ENCODE measurements at regions of chr1 and their contacts with region 1.

Region 1: GRCh38 chr1:38018864-38019343 is 6.4 kb downstream of the UTP11 start:
- DNase-seq: no peak
- H3K4me3 ChIP-seq: no peak overlapping the region
- H3K27me3 ChIP-seq: no peaks in the 10 kb centered on the region
- CTCF ChIP-seq: peak; percentile 61

Region 2: DNA sequence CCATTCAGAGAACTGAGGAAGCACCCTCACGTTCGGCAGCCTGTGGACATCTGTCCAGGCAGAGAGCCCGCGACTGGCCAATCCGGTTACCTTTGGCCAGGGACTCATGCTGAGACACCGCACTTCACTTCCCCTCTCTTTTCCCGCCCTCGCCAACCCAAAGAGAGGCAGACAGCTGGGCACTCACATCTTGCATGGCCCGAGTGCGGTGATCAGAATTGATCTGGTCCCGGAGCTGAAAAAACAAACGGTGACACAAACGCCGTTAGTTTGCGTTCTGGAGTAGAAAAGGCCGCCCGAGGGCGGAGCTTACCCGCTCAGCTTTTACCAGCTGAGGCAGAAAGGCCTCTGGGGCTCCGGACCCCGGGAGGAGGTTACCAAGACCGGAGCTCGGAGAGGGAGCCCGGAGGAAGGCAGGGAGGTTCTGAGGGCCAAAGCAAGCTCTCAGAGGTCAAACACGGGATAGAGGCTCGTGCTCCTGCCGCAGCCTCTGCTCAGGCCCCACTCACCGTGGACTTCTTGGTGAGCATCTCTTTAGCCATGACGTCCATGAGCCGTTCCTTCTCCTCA is 29.5 kb before region 1 on chr1:
- CTCF ChIA-PET with region 1: interaction called, 26 read pairs
- POLR2A ChIA-PET with region 1: no interaction called
- DNase-seq: no peak
- H3K4me3 ChIP-seq: peak overlapping the region; percentile 86
- H3K27me3 ChIP-seq: no peaks in the 10 kb centered on the region
- CTCF ChIP-seq: no peak

Region 3: GRCh38 chr1:37995751-37996345 is 23.1 kb before region 1 on chr1:
- CTCF ChIA-PET with region 1: interaction called, 26 read pairs
- POLR2A ChIA-PET with region 1: no interaction called
- DNase-seq: no peak
- H3K4me3 ChIP-seq: peak overlapping the region; percentile 41
- H3K27me3 ChIP-seq: no peaks in the 10 kb centered on the region
- CTCF ChIP-seq: no peak

Region 4: GRCh38 chr1:39592069-39592468 is 1573.2 kb after region 1 on chr1:
- CTCF ChIA-PET with region 1: no interaction called
- POLR2A ChIA-PET with region 1: interaction called, 12 read pairs
- DNase-seq: no peak
- H3K4me3 ChIP-seq: no peak overlapping the region
- H3K27me3 ChIP-seq: peaks cover 19% of the 10 kb centered on the region
- CTCF ChIP-seq: no peak